CD4-positive, alpha-beta memory T cell (primary cell): ENCODE measurements at regions of chr14 and their contacts with region 1.

Region 1: GRCh38 chr14:24332268-24332993 is 2.4 kb downstream of the ADCY4 start:
- DNase-seq: peak; percentile 89 to 92 (median 90)
- H3K4me3 ChIP-seq: peak overlapping the region; percentile 24 to 51
- H3K4me3 Mint-ChIP-seq: peak overlapping the region; percentile 76 to 93 (median 87)
- H3K27ac ChIP-seq: no peak overlapping the region
- H3K27ac Mint-ChIP-seq: peak overlapping the region; percentile 65 to 98 (median 86)
- H3K4me1 ChIP-seq: peaks cover 64% of the 10 kb centered on the region
- H3K4me1 Mint-ChIP-seq: peaks cover 40 to 91% (median 59%) of the 10 kb centered on the region in 4 donors
- H3K27me3 ChIP-seq: peaks cover 11% of the 10 kb centered on the region
- H3K27me3 Mint-ChIP-seq: peaks cover 6 to 13% of the 10 kb centered on the region in 2 donors

Region 2: GRCh38 chr14:24271134-24271833 is 61.1 kb before region 1 on chr14 and contains the start of gene RABGGTA:
- CTCF ChIA-PET with region 1: interaction called, 13 read pairs
- POLR2A ChIA-PET with region 1: interaction called, 8 read pairs
- intact Hi-C with region 1: loop called (anchors 1 kb)
- DNase-seq: peak; percentile 95 to 98 (median 97)
- H3K4me3 ChIP-seq: peak within 1 kb of the TSS; percentile 86 to 91
- H3K4me3 Mint-ChIP-seq: peak within 1 kb of the TSS; percentile 90 to 95 (median 91)
- H3K27ac ChIP-seq: peak within 1 kb of the TSS; percentile 94
- H3K27ac Mint-ChIP-seq: peak within 1 kb of the TSS; percentile 91 to 100 (median 99)
- H3K4me1 ChIP-seq: peaks cover 33% of the 10 kb centered on the region
- H3K4me1 Mint-ChIP-seq: peaks cover 24 to 46% (median 39%) of the 10 kb centered on the region in 4 donors
- H3K27me3 ChIP-seq: no peaks in the 10 kb centered on the region
- H3K27me3 Mint-ChIP-seq: no peaks in the 10 kb centered on the region
- total RNA-seq, gene RABGGTA: 55.6 to 62.5 TPM

Region 3: GRCh38 chr14:24299255-24300195 is 32.9 kb before region 1 on chr14 and contains the starts of genes DHRS1 and NOP9:
- CTCF ChIA-PET with region 1: interaction called, 23 read pairs
- POLR2A ChIA-PET with region 1: interaction called, 4 read pairs
- intact Hi-C with region 1: loop called (anchors 1 kb)
- DNase-seq: peak; percentile 89 to 92 (median 90)
- H3K4me3 ChIP-seq: peak within 1 kb of the TSS; percentile 77 to 85
- H3K4me3 Mint-ChIP-seq: peak within 1 kb of the TSS; percentile 91 to 99 (median 94)
- H3K27ac ChIP-seq: peak within 1 kb of the TSS; percentile 87
- H3K27ac Mint-ChIP-seq: peak within 1 kb of the TSS; percentile 96 to 99 (median 98)
- H3K4me1 ChIP-seq: peaks cover 42% of the 10 kb centered on the region
- H3K4me1 Mint-ChIP-seq: peaks cover 32 to 66% (median 51%) of the 10 kb centered on the region in 4 donors
- H3K27me3 ChIP-seq: no peaks in the 10 kb centered on the region
- H3K27me3 Mint-ChIP-seq: no peaks in the 10 kb centered on the region
- total RNA-seq, gene DHRS1: 37.6 to 38.6 TPM
- total RNA-seq, gene NOP9: 23.1 to 28.1 TPM

Region 4: DNA sequence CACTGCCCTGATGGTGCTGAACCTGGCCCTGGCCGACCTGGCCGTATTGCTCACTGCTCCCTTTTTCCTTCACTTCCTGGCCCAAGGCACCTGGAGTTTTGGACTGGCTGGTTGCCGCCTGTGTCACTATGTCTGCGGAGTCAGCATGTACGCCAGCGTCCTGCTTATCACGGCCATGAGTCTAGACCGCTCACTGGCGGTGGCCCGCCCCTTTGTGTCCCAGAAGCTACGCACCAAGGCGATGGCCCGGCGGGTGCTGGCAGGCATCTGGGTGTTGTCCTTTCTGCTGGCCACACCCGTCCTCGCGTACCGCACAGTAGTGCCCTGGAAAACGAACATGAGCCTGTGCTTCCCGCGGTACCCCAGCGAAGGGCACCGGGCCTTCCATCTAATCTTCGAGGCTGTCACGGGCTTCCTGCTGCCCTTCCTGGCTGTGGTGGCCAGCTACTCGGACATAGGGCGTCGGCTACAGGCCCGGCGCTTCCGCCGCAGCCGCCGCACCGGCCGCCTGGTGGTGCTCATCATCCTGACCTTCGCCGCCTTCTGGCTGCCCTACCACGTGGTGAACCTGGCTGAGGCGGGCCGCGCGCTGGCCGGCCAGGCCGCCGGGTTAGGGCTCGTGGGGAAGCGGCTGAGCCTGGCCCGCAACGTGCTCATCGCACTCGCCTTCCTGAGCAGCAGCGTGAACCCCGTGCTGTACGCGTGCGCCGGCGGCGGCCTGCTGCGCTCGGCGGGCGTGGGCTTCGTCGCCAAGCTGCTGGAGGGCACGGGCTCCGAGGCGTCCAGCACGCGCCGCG is 16.4 kb before region 1 on chr14:
- CTCF ChIA-PET with region 1: interaction called, 232 read pairs
- POLR2A ChIA-PET with region 1: interaction called, 75 read pairs
- intact Hi-C with region 1: loop called (anchors 1 kb)
- DNase-seq: no peak
- H3K4me3 ChIP-seq: no peak overlapping the region
- H3K4me3 Mint-ChIP-seq: peak overlapping the region in 5 of 8 donors; percentile 15 to 59 (median 52)
- H3K27ac ChIP-seq: no peak overlapping the region
- H3K27ac Mint-ChIP-seq: peak overlapping the region in 4 of 7 donors; percentile 68 to 90 (median 78)
- H3K4me1 ChIP-seq: peaks cover 42% of the 10 kb centered on the region
- H3K4me1 Mint-ChIP-seq: peaks cover 38 to 60% (median 47%) of the 10 kb centered on the region in 4 donors
- H3K27me3 ChIP-seq: no peaks in the 10 kb centered on the region
- H3K27me3 Mint-ChIP-seq: no peaks in the 10 kb centered on the region

Region 5: DNA sequence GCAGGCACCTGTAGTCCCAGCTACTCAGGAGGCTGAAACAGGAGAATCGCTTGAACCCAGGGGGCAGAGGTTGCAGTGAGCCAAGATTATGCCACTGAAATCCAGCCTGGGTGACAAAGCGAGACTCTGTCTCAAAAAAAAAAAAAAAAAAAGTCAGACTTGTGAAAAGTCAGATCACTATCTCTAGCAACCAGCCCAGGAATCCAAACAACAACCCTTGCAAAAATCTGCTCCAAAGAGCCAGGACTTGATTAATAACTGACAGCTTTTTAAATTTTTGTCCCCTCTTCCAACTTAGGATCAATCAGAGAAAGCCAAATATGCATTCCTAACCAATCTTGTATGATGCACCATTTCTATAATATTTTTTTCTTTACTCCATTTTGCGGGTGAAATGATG is 27.9 kb after region 1 on chr14:
- CTCF ChIA-PET with region 1: interaction called, 11 read pairs
- POLR2A ChIA-PET with region 1: interaction called, 4 read pairs
- intact Hi-C with region 1: no loop called
- DNase-seq: no peak
- H3K4me3 ChIP-seq: no peak overlapping the region
- H3K4me3 Mint-ChIP-seq: no peak overlapping the region
- H3K27ac ChIP-seq: no peak overlapping the region
- H3K27ac Mint-ChIP-seq: no peak overlapping the region
- H3K4me1 ChIP-seq: peaks cover 4% of the 10 kb centered on the region
- H3K4me1 Mint-ChIP-seq: peaks cover 0 to 3% (median 1%) of the 10 kb centered on the region in 4 donors
- H3K27me3 ChIP-seq: peaks cover 10% of the 10 kb centered on the region
- H3K27me3 Mint-ChIP-seq: peaks cover 12 to 27% of the 10 kb centered on the region in 2 donors

Region 6: DNA sequence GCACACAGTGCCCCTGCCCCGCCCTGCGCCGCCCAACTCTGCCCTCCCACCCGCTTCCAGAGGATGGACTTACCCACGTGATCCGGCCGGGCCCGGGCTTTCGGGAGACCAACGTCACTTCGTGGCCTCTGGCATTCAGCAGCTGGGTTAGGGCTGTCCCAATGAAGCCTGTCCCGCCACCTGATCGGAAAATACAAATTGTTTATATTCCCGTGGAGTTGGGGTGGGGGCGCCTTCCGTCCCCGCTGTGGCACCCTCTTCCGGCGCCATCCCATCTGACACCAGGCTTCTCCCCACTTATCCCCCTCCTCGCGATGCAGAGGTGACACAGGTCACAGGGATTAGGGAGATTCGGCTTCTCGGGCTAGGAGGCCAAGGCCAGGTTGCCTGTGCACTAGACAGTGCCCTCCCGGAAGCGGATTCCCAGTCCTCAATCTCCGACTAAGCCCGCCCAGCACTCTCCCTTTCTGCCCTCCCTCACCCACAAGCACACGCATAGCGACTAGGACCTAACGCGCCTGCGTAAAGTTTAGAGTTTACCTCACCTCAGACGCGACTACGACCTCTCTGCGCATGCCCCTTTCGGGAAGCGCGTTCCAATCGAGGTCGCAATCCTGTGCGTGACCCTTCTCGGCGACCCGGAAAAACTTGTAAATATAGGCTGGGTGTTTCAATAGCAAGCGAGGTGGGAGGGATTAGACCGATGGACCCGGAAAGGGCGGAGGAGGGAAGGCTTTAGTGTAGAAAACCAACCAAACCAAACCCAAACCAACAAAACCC is 110.0 kb after region 1 on chr14 and contains the start of gene SDR39U1:
- CTCF ChIA-PET with region 1: interaction called, 791 read pairs
- POLR2A ChIA-PET with region 1: interaction called, 176 read pairs
- intact Hi-C with region 1: no loop called
- DNase-seq: peak; percentile 95 to 99 (median 98)
- H3K4me3 ChIP-seq: peak within 1 kb of the TSS; percentile 73 to 85
- H3K4me3 Mint-ChIP-seq: peak within 1 kb of the TSS; percentile 87 to 97 (median 92)
- H3K27ac ChIP-seq: peak within 1 kb of the TSS; percentile 93
- H3K27ac Mint-ChIP-seq: peak within 1 kb of the TSS; percentile 93 to 99 (median 99)
- H3K4me1 ChIP-seq: peaks cover 27% of the 10 kb centered on the region
- H3K4me1 Mint-ChIP-seq: peaks cover 20 to 57% (median 41%) of the 10 kb centered on the region in 4 donors
- H3K27me3 ChIP-seq: no peaks in the 10 kb centered on the region
- H3K27me3 Mint-ChIP-seq: no peaks in the 10 kb centered on the region
- total RNA-seq, gene SDR39U1: 102 to 109 TPM